AG04449 (cell line): ENCODE measurements at regions of chr22 and their contacts with region 1.

Region 1: GRCh38 chr22:45553351-45554039 is 50.8 kb downstream of the FBLN1 start:
- DNase-seq: peak; percentile 59
- H3K4me3 ChIP-seq: peak overlapping the region; percentile 8; the same call in 1 of the 2 replicates
- CTCF ChIP-seq: peak; percentile 92

Region 2: GRCh38 chr22:45101515-45102227 is 451.8 kb before region 1 on chr22:
- CTCF ChIA-PET with region 1: interaction called, 21 read pairs
- POLR2A ChIA-PET with region 1: no interaction called
- DNase-seq: no peak
- H3K4me3 ChIP-seq: no peak overlapping the region
- CTCF ChIP-seq: peak; percentile 84

Region 3: DNA sequence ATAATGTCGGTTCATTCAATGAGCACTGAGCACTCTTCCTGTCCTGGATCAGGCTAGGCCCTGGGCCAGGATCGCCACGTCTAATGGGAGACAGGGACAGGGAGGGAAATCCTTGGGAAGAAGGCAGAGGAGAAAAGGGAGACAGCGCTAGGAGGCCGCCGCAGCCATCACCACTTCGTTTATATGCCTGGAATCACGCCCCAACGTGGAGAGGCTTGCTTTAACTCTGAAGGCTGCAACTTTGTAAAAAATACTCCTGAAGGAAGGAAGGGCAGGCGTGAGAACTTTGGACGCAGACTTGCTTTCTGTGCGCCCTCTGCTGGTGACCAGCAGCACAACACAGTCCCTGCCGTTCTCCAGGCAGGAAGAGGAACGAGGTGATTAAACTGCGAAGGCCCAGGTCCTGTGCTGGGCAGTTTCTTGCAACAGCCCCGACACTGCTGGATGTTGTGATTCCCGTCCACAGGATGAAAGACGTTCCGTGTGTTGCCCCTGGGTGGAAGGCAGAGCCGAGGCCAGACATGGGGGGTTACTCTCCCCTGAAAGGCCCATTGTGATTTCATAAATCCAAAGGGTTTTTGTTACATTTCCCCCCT is 117.9 kb before region 1 on chr22:
- CTCF ChIA-PET with region 1: interaction called, 286 read pairs
- POLR2A ChIA-PET with region 1: no interaction called
- DNase-seq: peak; percentile 56
- H3K4me3 ChIP-seq: no peak overlapping the region
- CTCF ChIP-seq: peak; percentile 97

Region 4: DNA sequence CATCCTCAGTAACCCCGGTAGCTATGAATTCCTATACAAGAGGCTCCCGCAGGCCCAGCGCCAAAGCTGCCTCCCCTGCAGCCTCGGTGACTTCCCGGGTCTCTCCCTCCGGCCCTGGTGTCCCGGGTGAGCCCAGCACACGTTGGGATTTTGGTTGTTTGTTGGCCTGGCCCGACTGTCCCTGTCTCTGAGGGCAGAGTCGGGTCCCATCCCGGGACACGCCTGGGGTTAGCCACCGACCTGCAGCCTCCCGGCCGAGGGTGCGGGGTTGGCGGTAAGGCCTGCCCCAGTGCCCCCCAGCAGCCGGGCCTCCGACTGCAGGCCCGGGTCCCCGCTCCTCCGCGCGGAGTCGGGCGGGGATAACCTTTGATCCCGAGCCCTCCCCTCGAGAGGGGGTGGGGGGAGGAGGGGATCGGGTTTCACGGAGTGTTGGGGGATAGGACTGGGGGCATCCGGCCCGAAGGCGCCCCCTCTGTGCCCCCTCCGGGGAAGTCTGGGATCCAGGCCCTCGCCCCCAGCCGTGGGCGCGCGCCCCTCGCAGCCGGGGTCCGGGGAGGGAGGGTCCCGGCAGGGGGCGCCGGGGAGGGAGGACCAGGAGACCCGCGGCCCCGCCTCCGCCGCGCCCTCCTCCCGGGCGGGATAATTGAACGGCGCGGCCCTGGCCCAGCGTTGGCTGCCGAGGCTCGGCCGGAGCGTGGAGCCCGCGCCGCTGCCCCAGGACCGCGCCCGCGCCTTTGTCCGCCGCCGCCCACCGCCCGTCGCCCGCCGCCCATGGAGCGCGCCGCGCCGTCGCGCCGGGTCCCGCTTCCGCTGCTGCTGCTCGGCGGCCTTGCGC is 51.1 kb before region 1 on chr22 and contains the start of gene FBLN1:
- CTCF ChIA-PET with region 1: interaction called, 25 read pairs
- POLR2A ChIA-PET with region 1: interaction called, 3 read pairs
- DNase-seq: no peak
- H3K4me3 ChIP-seq: peak within 1 kb of the TSS; percentile 87
- CTCF ChIP-seq: peak; percentile 32

Region 5: DNA sequence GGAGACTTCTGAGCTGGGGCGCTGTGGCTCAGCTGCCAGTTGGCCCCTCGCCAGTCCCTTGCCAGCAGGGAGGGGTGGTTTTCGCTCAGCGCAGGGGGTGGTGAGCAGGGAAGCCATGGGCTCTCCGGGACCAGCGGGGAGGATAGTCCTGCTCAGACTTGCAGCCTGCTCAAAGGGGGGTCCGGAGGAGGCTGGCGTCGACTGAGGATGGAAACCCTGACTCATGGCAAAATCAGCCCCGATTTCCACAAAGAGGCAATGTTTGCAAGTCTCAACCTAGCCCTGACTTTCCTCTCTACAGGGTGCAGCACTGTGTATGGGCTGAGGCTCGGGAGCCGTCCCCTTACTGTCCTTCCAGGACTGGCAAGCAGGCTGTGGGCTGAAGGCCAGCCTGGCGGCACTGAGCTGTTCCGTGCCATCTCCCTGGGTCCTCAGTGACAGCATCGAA is 15.7 kb before region 1 on chr22:
- CTCF ChIA-PET with region 1: interaction called, 72 read pairs
- POLR2A ChIA-PET with region 1: interaction called, 5 read pairs
- DNase-seq: no peak
- H3K4me3 ChIP-seq: peak overlapping the region; percentile 6; the same call in 1 of the 2 replicates
- CTCF ChIP-seq: no peak

Region 6: DNA sequence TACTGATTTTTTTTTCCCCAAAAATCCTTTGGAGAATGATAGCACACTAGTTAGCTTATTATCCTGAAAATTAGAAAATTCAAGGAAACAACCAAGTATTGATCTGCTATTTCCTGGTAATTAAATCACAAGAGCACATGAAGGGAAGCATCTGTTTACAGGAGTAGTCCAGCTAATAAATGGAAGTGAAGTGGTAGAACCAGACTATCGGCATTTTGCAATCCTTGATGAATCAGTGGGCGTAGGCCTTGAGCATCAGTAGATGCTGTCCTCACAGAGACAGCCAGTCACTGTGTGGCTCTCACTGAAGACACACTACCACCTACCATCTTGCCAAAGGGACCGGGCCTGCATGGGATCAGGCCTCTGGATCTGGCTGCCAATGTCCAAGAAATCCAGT is 18.9 kb after region 1 on chr22:
- CTCF ChIA-PET with region 1: interaction called, 52 read pairs
- POLR2A ChIA-PET with region 1: no interaction called
- DNase-seq: no peak
- H3K4me3 ChIP-seq: no peak overlapping the region
- CTCF ChIP-seq: no peak